ENCODE measurements at regions of chr12 and their contacts with region 1.

Region 1: GRCh38 chr12:57410534-57410933 is 20.3 kb downstream of the R3HDM2 start:
- DNase-seq: no peak
- ATAC-seq: no peak
- H3K4me3 Mint-ChIP-seq: no peak overlapping the region
- H3K27ac Mint-ChIP-seq: no peak overlapping the region
- H3K4me1 Mint-ChIP-seq: peaks cover 16% of the 10 kb centered on the region
- H3K27me3 Mint-ChIP-seq: no peaks in the 10 kb centered on the region
- CTCF ChIP-seq: no peak

Region 2: DNA sequence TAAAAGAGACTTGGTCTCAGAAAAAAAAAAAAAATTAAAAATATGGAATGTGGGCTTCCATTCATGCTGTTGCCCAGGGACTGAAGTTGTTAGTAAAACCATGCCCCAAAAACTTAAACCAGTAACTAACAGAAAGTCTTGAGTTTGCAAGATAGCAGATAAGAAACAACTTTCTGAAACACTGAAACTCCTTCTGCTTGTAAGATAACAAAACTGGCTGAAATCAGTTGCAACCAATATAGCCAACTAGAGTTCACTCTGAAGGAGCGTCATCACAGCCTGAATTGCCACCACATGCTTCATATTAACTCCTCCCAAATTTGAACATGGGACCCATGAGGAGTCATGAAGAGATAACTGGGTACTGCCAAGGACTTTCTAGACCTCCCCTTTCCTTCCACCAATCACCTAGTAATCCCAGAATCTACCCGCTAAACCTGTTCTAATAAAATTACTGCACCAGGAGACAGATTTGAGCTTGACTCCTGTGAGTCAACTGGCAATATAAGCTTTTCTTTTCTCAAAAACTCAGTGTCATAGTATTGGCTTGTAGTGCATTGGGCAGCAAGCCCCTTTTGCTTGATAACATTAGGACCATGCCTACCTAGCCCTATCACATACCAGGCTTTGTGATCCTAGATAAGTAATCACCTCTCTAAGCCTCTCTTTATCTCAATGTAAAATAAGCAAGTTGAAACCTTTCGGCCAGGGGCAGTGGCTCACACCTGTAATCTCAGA is 33.3 kb before region 1 on chr12:
- CTCF ChIA-PET with region 1: no interaction called
- POLR2A ChIA-PET with region 1: no interaction called
- intact Hi-C with region 1: loop called (anchors 5 kb)
- DNase-seq: no peak
- ATAC-seq: no peak
- H3K4me3 Mint-ChIP-seq: no peak overlapping the region
- H3K27ac Mint-ChIP-seq: no peak overlapping the region
- H3K4me1 Mint-ChIP-seq: peaks cover 4% of the 10 kb centered on the region
- H3K27me3 Mint-ChIP-seq: no peaks in the 10 kb centered on the region
- CTCF ChIP-seq: no peak

Region 3: DNA sequence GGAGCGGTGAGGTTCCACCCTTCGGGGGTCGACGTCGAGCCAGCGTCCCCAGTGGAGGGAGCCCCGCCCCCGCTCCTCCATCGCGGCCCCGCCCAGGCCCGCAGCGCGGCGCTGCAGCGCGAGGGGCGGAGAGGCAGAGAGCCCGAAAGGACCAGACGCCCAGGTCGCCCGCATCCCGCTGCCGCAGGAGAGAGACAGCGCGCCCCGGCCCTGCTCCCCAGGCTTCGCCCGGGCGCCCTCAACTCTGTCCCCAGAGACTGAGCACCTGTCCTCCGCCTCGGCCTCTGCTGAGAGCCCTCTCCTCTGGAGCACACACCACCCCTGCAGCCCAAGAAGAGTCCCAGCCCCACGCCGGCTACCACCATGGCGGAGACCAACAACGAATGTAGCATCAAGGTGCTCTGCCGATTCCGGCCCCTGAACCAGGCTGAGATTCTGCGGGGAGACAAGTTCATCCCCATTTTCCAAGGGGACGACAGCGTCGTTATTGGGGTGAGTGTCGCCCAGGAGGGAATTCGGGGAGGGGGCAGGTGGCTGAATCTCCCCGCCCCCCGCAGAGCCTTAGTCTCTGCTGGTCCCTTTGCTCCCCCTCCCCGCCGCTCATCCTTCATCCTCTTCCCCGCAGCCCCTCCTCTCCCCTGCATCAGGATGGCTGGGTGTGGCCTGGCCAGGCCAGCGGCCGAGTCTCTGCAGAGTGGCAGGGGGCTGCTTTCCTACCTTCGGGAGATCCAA is 139.5 kb after region 1 on chr12 and contains the start of gene KIF5A:
- CTCF ChIA-PET with region 1: no interaction called
- POLR2A ChIA-PET with region 1: no interaction called
- intact Hi-C with region 1: no loop called
- DNase-seq: peak; percentile 55
- ATAC-seq: peak; percentile 44
- H3K4me3 Mint-ChIP-seq: peak within 1 kb of the TSS; percentile 75
- H3K27ac Mint-ChIP-seq: no peak within 1 kb of the TSS
- H3K4me1 Mint-ChIP-seq: peaks cover 31% of the 10 kb centered on the region
- H3K27me3 Mint-ChIP-seq: peaks cover 10% of the 10 kb centered on the region
- CTCF ChIP-seq: no peak
- total RNA-seq, gene KIF5A: 0.13 and 0.15 TPM in 2 replicates

Measured in activated B cell treated with CpG ODN at 0.5 μM for 24 hours (primary cell).